Common myeloid progenitor, CD34-positive (primary cell): ENCODE measurements at regions of chr19 and their contacts with region 1.

Region 1: GRCh38 chr19:12913011-12913561 is 6.0 kb downstream of the SYCE2 start:
- DNase-seq: peak; percentile 12 to 46 (median 44)
- H3K4me3 ChIP-seq: peak overlapping the region in 2 of 7 experiments; percentile 46 to 47
- H3K27ac ChIP-seq: peak overlapping the region; percentile 51 to 78
- H3K4me1 ChIP-seq: peaks cover 5 to 40% (median 31%) of the 10 kb centered on the region in 4 experiments
- H3K27me3 ChIP-seq: no peaks in the 10 kb centered on the region

Region 2: GRCh38 chr19:12806239-12807081 is 106.6 kb before region 1 on chr19 and contains the start of gene RNASEH2A:
- CTCF ChIA-PET with region 1: no interaction called
- POLR2A ChIA-PET with region 1: no interaction called
- DNase-seq: peak; percentile 83 to 92 (median 91)
- H3K4me3 ChIP-seq: peak within 1 kb of the TSS; percentile 36 to 85 (median 74)
- H3K27ac ChIP-seq: peak within 1 kb of the TSS in 1 of 2 experiments; percentile 74
- H3K4me1 ChIP-seq: peaks cover 0 to 25% (median 24%) of the 10 kb centered on the region in 4 experiments
- H3K27me3 ChIP-seq: peaks cover 0 to 3% (median 0%) of the 10 kb centered on the region in 5 experiments

Region 3: GRCh38 chr19:12881172-12881808 is 31.8 kb before region 1 on chr19 and contains the start of gene DNASE2:
- CTCF ChIA-PET with region 1: interaction called, 11 read pairs
- POLR2A ChIA-PET with region 1: interaction called, 6 read pairs
- DNase-seq: peak; percentile 96 to 98 (median 97)
- H3K4me3 ChIP-seq: peak within 1 kb of the TSS; percentile 48 to 92 (median 82)
- H3K27ac ChIP-seq: peak within 1 kb of the TSS in 1 of 2 experiments; percentile 79
- H3K4me1 ChIP-seq: peaks cover 0 to 31% (median 28%) of the 10 kb centered on the region in 4 experiments
- H3K27me3 ChIP-seq: no peaks in the 10 kb centered on the region

Region 4: DNA sequence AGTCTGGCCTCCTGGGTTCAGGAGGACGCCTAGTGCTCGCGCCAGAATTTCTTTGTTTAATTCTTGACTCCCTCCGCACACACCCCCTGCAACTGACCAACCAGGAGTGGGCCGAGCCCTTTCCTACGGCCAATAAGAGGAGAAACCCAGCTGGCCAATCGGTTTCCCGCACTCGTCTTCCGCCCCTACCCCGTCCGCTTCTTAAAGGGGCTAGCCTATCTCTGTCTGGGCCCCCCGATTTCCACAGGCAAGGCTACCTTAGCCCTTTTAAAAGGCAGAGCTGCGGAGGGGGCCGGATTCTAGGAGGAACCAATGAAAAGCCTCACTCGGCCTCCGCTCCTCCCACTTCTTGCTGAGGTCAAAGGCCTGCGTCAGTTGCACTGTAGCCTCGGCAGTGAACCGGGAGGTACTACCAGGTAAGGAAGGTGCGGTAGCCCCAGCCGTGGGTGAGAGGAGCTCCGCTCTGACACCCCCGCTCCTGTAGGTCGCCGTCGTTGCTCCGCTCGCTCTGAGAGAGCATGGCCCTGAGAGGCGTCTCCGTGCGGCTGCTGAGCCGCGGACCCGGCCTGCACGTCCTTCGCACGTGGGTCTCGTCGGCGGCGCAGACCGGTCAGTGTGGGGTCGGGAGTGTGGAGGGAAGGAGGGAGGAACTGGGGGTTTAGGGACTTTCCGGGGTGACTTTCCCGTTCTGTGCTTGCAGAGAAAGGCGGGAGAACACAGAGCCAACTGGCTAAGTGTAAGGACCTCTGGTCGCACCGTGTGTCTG is 22.1 kb before region 1 on chr19 and contains the start of gene GCDH:
- CTCF ChIA-PET with region 1: interaction called, 11 read pairs
- POLR2A ChIA-PET with region 1: interaction called, 12 read pairs
- DNase-seq: peak; percentile 99 to 100 (median 99)
- H3K4me3 ChIP-seq: peak within 1 kb of the TSS; percentile 63 to 98 (median 90)
- H3K27ac ChIP-seq: peak within 1 kb of the TSS; percentile 50 to 79
- H3K4me1 ChIP-seq: peaks cover 4 to 26% (median 20%) of the 10 kb centered on the region in 4 experiments
- H3K27me3 ChIP-seq: no peaks in the 10 kb centered on the region

Region 5: DNA sequence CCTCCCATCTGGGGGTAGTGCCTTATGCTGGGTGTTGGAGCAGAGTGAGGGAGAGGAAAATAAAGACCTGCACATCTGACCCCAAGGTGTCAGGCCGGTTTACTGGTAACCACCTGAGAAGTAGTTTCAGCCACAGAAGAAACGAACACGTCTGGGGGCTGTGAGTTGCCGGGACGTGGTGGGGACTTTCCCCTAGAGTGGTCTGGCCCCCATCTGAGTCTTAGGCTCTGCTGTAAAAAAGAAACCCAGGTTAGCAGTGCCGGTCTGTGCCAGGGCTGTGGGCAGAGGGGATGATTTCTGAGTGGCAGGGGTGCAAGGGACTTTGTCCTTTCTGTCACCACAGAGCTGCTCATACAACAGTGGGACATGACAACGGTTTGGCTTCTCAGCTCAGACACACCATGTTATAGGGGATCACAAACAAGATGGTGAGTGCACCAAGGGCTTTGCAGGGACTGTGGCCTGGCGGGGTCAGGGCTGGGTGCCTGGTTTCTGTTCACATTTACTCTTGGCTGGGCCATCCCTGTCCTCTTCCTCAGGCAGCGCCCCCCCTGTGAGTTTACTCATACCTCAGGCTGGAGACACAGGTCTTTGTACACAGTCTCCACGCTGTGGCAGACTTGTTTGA is 13.1 kb before region 1 on chr19:
- CTCF ChIA-PET with region 1: interaction called, 12 read pairs
- POLR2A ChIA-PET with region 1: interaction called, 3 read pairs
- DNase-seq: no peak
- H3K4me3 ChIP-seq: no peak overlapping the region
- H3K27ac ChIP-seq: no peak overlapping the region
- H3K4me1 ChIP-seq: no peaks in the 10 kb centered on the region
- H3K27me3 ChIP-seq: no peaks in the 10 kb centered on the region

Region 6: GRCh38 chr19:12938234-12939025 is 25.3 kb after region 1 on chr19 and contains the start of gene CALR:
- CTCF ChIA-PET with region 1: interaction called, 4 read pairs
- POLR2A ChIA-PET with region 1: interaction called, 15 read pairs
- DNase-seq: peak; percentile 100
- H3K4me3 ChIP-seq: peak within 1 kb of the TSS; percentile 94 to 100 (median 98)
- H3K27ac ChIP-seq: peak within 1 kb of the TSS; percentile 98 to 99
- H3K4me1 ChIP-seq: peaks cover 27 to 81% (median 65%) of the 10 kb centered on the region in 4 experiments
- H3K27me3 ChIP-seq: no peaks in the 10 kb centered on the region